K562 (cell line): ENCODE measurements at regions of chr5 and their contacts with region 1.

Region 1: GRCh38 chr5:72366324-72366976 is 46.3 kb downstream of the PTCD2 start:
- DNase-seq: peak; percentile 26 to 80 (median 42)
- ATAC-seq: peak; percentile 98
- H3K4me3 ChIP-seq: no peak overlapping the region
- H3K27ac ChIP-seq: no peak overlapping the region
- H3K4me1 ChIP-seq: no peaks in the 10 kb centered on the region; a peak in 1 of 5 replicates
- H3K27me3 ChIP-seq: no peaks in the 10 kb centered on the region
- CTCF ChIP-seq: peak; percentile 67 to 85 (median 75)
- EP300 ChIP-seq: no peak
- POLR2A ChIP-seq: no peak
- RAD21 ChIP-seq: peak; percentile 89 to 90

Region 2: GRCh38 chr5:72347801-72348305 is 18.6 kb before region 1 on chr5:
- CTCF ChIA-PET with region 1: no interaction called
- POLR2A ChIA-PET with region 1: no interaction called
- in situ Hi-C with region 1: no loop called
- intact Hi-C with region 1: no loop called
- DNase-seq: no peak
- ATAC-seq: no peak
- H3K4me3 ChIP-seq: no peak overlapping the region
- H3K27ac ChIP-seq: no peak overlapping the region
- H3K4me1 ChIP-seq: no peaks in the 10 kb centered on the region
- H3K27me3 ChIP-seq: no peaks in the 10 kb centered on the region
- CTCF ChIP-seq: no peak
- EP300 ChIP-seq: no peak
- POLR2A ChIP-seq: no peak
- RAD21 ChIP-seq: no peak

Region 3: GRCh38 chr5:72584466-72584865 is 218.0 kb after region 1 on chr5:
- CTCF ChIA-PET with region 1: interaction called, 3 read pairs
- POLR2A ChIA-PET with region 1: no interaction called
- in situ Hi-C with region 1: no loop called
- intact Hi-C with region 1: loop called (anchors 1 kb)
- DNase-seq: peak in 2 of 4 experiments; percentile 17 to 29
- ATAC-seq: peak; percentile 68; the same call in 2 of the 3 replicates
- H3K4me3 ChIP-seq: no peak overlapping the region
- H3K27ac ChIP-seq: no peak overlapping the region
- H3K4me1 ChIP-seq: peaks cover 0 to 18% of the 10 kb centered on the region in 2 experiments; a peak in 3 of 5 replicates
- H3K27me3 ChIP-seq: no peaks in the 10 kb centered on the region
- CTCF ChIP-seq: peak; percentile 6 to 43 (median 18); a peak in 2 of 6 replicates
- EP300 ChIP-seq: no peak
- POLR2A ChIP-seq: no peak
- RAD21 ChIP-seq: peak; percentile 31 to 62; a peak in 2 of 4 replicates

Region 4: GRCh38 chr5:72842816-72843215 is 476.4 kb after region 1 on chr5:
- CTCF ChIA-PET with region 1: interaction called, 5 read pairs
- POLR2A ChIA-PET with region 1: no interaction called
- in situ Hi-C with region 1: no loop called
- intact Hi-C with region 1: loop called (anchors 2 kb)
- DNase-seq: peak in 2 of 4 experiments; percentile 69 to 77
- ATAC-seq: peak; percentile 98
- H3K4me3 ChIP-seq: no peak overlapping the region
- H3K27ac ChIP-seq: peak overlapping the region; percentile 16; the same call in 1 of the 3 replicates
- H3K4me1 ChIP-seq: peaks cover 0 to 12% of the 10 kb centered on the region in 2 experiments; a peak in 2 of 5 replicates
- H3K27me3 ChIP-seq: no peaks in the 10 kb centered on the region
- CTCF ChIP-seq: peak; percentile 58 to 73 (median 59)
- EP300 ChIP-seq: peak; percentile 37; the same call in 1 of the 2 replicates
- POLR2A ChIP-seq: no peak
- RAD21 ChIP-seq: peak; percentile 80 to 86